ENCODE measurements at regions of chr6 and their contacts with region 1.

Region 1: DNA sequence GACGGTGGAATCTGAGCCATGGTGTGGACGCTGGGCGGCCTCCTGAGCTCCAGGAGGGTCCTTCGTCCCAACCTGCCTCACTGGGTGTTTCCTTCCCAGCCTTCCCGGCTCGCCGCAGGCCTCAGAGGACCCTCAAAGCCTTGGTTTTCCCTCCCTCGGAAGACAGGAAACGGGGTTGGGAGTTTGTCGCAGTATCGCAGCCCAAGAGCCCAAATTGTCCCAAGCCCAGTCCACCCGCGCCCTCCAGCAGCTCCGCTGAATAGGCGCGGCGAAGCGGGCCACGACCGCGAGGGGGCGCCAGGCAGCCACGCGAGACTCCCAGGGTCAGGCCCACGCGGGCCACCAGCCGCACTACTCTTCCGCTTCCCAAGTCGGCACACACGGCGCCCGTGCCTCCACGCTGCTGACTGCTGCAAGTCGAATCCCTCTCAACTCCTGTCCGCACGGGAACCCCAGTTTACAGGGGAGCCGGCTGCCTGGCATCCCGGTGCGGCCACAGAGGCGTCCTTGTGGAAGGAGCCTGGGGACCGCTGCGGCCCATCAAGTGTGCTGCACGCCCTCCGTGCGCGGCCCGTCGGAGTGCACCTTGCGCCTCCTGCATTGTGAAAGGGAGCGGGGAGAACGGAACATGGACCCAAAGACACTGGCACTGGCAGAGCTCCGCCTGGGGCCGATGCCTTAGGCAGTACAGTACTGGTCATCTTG is 40.4 kb upstream of the HMGA1 start:
- DNase-seq: peak; percentile 83
- H3K4me3 Mint-ChIP-seq: peak overlapping the region; percentile 79
- H3K27ac Mint-ChIP-seq: peak overlapping the region; percentile 70
- H3K4me1 Mint-ChIP-seq: peaks cover 5% of the 10 kb centered on the region
- H3K27me3 Mint-ChIP-seq: peaks cover 10% of the 10 kb centered on the region

Region 2: DNA sequence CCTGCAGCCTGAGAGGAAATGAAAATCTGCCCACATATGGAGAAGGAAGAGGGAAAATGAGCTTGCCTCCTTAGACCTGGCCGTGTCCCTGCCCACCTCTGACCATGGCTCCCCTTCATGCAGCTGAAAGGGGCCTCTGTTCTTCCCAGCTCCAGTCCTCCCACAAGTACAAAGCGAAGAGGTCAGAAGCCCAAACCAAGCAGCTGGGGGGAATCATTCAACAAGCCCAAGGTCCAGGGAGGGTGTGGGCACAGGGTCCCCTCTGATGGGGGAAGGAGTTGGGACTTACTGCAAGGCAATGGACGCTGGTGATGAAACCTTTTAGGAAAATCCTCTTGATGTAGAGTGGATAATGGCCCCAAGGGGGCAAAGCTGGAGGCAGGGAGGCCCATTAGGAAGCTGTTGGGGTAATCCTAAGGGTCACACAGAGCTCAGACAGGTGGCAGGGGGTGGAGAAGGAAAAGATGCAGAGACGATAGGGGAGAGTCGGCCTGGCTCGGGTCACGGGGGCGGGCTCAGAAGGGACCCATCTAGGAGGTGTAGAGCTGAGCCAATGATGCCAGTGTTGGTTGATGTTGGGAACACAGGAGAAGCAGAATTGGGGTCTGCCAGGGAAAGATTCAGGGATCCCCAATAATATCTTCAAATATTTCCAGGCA is 34.3 kb before region 1 on chr6:
- intact Hi-C with region 1: loop called (anchors 2 kb)
- DNase-seq: no peak
- H3K4me3 Mint-ChIP-seq: no peak overlapping the region
- H3K27ac Mint-ChIP-seq: no peak overlapping the region
- H3K4me1 Mint-ChIP-seq: no peaks in the 10 kb centered on the region
- H3K27me3 Mint-ChIP-seq: peaks cover 20% of the 10 kb centered on the region

Region 3: GRCh38 chr6:34236131-34236996 is 40.1 kb after region 1 on chr6 and contains the start of gene HMGA1:
- intact Hi-C with region 1: loop called (anchors 1 kb)
- DNase-seq: peak; percentile 83
- H3K4me3 Mint-ChIP-seq: peak within 1 kb of the TSS; percentile 86
- H3K27ac Mint-ChIP-seq: peak within 1 kb of the TSS; percentile 92
- H3K4me1 Mint-ChIP-seq: peaks cover 43% of the 10 kb centered on the region
- H3K27me3 Mint-ChIP-seq: no peaks in the 10 kb centered on the region
- total RNA-seq, gene HMGA1: 415 and 438 TPM in 2 replicates

Region 4: DNA sequence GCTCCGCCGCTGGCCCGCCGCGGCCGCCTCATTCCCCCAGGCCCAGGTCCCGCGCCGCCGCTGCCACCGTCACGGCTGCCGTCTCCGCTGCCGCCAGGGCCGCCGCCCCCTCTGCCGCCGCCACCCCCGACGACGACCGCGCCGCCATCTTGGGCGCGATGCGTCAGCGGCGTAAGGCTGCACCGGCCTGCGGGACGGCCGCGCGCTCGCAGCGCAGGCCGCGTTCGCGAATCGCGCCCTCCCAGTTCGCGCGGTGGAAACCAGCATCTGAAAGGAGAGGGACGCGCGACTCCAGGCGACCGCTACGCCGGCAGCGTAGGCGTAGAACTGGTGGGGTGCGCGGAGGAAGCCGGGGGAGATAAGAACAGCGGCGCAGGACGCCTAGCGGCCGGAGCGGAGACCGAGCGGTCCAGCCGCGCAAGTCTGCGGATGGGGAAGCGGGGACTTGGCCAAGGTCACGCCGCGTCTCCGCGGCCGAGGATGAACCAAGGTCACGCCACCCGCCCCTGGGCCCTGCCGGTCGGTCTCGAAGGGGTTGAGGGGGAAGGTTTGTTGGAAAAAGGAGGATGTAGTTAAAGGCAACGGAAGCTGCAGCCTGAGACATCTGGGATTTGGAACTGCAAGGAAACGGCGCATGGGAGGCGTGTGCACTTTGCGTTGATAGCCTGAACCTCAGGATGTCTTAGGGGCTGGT is 196.4 kb after region 1 on chr6 and contains the start of gene NUDT3:
- intact Hi-C with region 1: loop called (anchors 1 kb)
- DNase-seq: peak; percentile 93
- H3K4me3 Mint-ChIP-seq: peak within 1 kb of the TSS; percentile 97
- H3K27ac Mint-ChIP-seq: peak within 1 kb of the TSS; percentile 88
- H3K4me1 Mint-ChIP-seq: peaks cover 18% of the 10 kb centered on the region
- H3K27me3 Mint-ChIP-seq: peaks cover 3% of the 10 kb centered on the region
- total RNA-seq, gene NUDT3: 20.0 and 20.8 TPM in 2 replicates

Region 5: GRCh38 chr6:34414999-34415858 is 219.0 kb after region 1 on chr6:
- intact Hi-C with region 1: loop called (anchors 1 kb)
- DNase-seq: peak; percentile 9
- H3K4me3 Mint-ChIP-seq: no peak overlapping the region
- H3K27ac Mint-ChIP-seq: no peak overlapping the region
- H3K4me1 Mint-ChIP-seq: peaks cover 34% of the 10 kb centered on the region
- H3K27me3 Mint-ChIP-seq: no peaks in the 10 kb centered on the region